Panc1 (cell line): ENCODE measurements at regions of chr4 and their contacts with region 1.

Region 1: DNA sequence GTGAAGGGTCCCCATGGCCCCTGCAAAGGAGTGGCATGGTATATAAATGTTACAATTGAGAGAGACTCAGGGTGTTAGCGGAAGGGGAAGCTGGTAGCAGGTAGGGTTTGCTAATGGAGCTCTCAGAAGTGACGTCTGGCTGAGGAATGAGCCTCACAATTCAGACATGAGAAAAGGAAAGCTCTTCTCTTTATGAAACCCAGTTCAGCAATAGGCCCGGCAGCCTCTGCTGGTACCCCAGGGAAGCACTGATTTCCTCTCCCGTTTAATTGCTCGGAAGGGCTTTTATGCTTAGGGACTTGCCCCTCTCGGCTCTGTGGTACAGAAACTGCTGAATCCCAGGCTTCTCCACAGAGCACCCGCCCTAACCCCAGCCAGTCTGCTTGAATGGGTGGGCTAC is 19.4 kb upstream of the AFAP1 start:
- DNase-seq: no peak
- ATAC-seq: no peak
- H3K4me3 ChIP-seq: no peak overlapping the region
- H3K27ac ChIP-seq: peak overlapping the region; percentile 99
- H3K4me1 ChIP-seq: peaks cover 72% of the 10 kb centered on the region
- H3K27me3 ChIP-seq: no peaks in the 10 kb centered on the region
- CTCF ChIP-seq: no peak

Region 2: GRCh38 chr4:7939377-7940108 is 19.5 kb before region 1 on chr4 and contains the start of gene AFAP1:
- CTCF ChIA-PET with region 1: no interaction called
- POLR2A ChIA-PET with region 1: interaction called, 12 read pairs
- in situ Hi-C with region 1: no loop called
- intact Hi-C with region 1: no loop called
- DNase-seq: no peak
- ATAC-seq: peak; percentile 87
- H3K4me3 ChIP-seq: peak within 1 kb of the TSS; percentile 64 to 79
- H3K27ac ChIP-seq: peak within 1 kb of the TSS; percentile 97
- H3K4me1 ChIP-seq: peaks cover 34% of the 10 kb centered on the region
- H3K27me3 ChIP-seq: no peaks in the 10 kb centered on the region
- CTCF ChIP-seq: no peak
- total RNA-seq, gene AFAP1: 94.7 TPM